ENCODE measurements at regions of chr5 and their contacts with region 1.

Region 1: GRCh38 chr5:88675708-88676636 is 207.0 kb downstream of the MEF2C start:
- DNase-seq: no peak
- H3K4me3 ChIP-seq: peak overlapping the region in 7 of 8 donors; percentile 13 to 67 (median 43)
- H3K27ac ChIP-seq: no peak overlapping the region
- H3K4me1 ChIP-seq: peaks cover 21 to 63% (median 34%) of the 10 kb centered on the region in 6 donors
- H3K27me3 ChIP-seq: peaks cover 42 to 100% (median 98%) of the 10 kb centered on the region in 7 donors
- CTCF ChIP-seq: no peak
- POLR2A ChIP-seq: no peak

Region 2: DNA sequence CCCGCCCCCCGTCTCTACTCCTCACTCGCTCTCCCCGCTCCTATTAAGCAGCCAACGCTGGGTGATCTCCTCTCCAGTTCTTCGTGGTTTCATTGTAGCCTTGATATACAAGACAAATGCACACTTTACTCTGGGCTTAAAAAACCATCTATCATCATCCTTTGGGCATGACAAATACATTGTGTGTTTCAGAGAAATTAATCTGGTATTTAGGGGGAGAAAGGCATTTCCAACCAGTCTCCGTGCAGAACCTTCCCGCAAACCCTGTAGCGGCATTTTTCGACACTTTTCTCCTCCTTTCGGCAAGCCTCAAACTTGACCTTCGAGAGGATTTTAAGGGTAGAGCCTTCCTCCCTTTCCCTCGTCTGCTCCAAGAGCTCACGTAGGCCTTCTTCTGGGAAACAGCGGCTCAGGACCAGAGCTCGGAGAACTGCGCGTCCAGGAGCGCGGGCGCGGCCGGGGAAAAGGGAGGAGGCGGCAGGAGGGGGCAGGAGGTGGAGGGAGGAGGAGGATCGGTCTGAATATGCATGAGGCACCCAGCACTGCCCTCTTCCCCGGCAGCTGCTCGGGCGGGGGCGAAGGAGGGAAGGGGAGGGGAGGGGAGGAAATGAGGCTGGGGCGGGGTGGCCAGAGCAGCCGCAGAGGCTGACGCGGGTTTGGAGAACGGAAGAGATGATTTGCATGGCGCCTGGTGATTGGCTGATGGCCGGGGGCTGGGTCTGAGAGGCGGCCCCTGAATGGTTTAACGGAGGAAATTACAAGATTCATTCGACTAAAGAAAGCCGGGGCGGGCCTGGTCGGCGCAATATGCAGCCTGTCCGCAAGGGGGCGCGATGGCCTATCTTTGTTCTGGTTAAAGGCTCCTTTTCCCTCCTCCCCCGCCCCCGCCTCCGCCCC is 534.9 kb before region 1 on chr5:
- intact Hi-C with region 1: loop called (anchors 10 kb)
- DNase-seq: peak; percentile 88
- H3K4me3 ChIP-seq: peak overlapping the region; percentile 31 to 67 (median 37)
- H3K27ac ChIP-seq: peak overlapping the region in 6 of 8 donors; percentile 3 to 51 (median 35)
- H3K4me1 ChIP-seq: peaks cover 5 to 60% (median 32%) of the 10 kb centered on the region in 6 donors
- H3K27me3 ChIP-seq: peaks cover 0 to 90% (median 61%) of the 10 kb centered on the region in 7 donors
- CTCF ChIP-seq: peak in 10 of 11 experiments; percentile 37 to 84 (median 65)
- POLR2A ChIP-seq: no peak

Measured in spleen (tissue), 13 donors.